ENCODE measurements at regions of chr11 and their contacts with region 1.

Region 1: DNA sequence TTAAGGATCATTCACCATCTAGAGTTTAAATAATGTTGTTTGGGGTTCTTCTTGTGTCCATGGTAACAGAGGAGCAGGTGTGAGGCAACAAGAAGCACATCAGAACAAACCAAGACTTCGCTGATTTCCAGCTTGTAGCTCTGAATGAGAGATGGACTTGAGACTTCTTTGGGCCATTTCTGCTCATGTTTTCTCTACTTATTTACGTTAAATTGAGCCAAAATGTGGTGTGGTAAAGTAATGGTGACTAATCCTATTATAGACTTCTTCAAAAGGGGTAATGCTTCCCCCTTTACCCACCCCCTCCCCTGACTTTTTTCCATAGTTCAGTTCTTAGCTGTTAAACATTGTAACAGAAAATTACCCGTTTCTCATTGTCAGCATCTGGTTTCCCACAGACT is 65.2 kb downstream of the CSTPP1 start:
- DNase-seq: no peak
- H3K4me3 ChIP-seq: no peak overlapping the region
- H3K27me3 ChIP-seq: no peaks in the 10 kb centered on the region
- CTCF ChIP-seq: no peak

Region 2: GRCh38 chr11:47143322-47143721 is 141.5 kb after region 1 on chr11:
- CTCF ChIA-PET with region 1: no interaction called
- POLR2A ChIA-PET with region 1: interaction called, 24 read pairs
- DNase-seq: peak; percentile 84
- H3K4me3 ChIP-seq: no peak overlapping the region
- H3K27me3 ChIP-seq: no peaks in the 10 kb centered on the region
- CTCF ChIP-seq: no peak